Activated CD8-positive, alpha-beta T cell treated with anti-CD3 and anti-CD28 coated beads for 36 hours (primary cell): ENCODE measurements at regions of chr1 and their contacts with region 1.

Region 1: GRCh38 chr1:24970399-24970753 is 40.3 kb upstream of the RUNX3 start:
- DNase-seq: peak; percentile 48
- ATAC-seq: no peak
- H3K4me3 Mint-ChIP-seq: peak overlapping the region; percentile 77
- H3K27ac Mint-ChIP-seq: peak overlapping the region; percentile 89
- H3K4me1 Mint-ChIP-seq: peaks cover 85% of the 10 kb centered on the region
- H3K27me3 Mint-ChIP-seq: no peaks in the 10 kb centered on the region
- CTCF ChIP-seq: peak; percentile 26

Region 2: DNA sequence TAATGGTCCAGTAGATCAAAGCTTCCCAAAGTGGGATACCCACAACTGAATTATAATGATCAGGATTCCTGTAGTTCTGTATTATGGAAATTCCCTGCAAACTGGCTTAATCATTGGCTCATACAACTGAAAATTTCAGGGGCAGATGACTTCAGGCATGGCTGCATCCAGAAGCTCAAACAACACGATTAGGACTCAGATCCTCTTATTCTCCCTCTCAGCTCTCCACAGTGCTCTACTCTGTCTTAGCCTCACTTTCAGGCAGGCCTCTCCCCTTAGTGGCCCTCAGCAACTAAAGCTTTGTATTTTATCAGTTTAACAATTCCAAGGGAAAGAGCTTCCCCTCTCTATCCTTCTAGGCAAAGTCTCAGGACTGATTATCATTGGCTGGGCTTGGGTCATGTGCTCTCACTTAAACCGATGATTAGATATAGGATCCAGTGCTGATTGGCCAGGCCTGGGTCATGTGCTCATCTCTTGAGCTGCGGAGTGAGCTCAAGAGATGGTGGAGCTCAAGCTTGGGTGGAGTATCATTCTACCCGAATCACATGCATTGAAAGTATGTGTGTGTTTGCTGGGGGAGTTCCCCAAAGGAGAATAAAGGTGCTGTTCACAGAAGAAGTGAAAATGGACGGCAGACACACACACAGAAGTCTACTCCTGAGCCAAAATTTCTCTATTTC is 17.6 kb after region 1 on chr1:
- CTCF ChIA-PET with region 1: interaction called, 40 read pairs
- POLR2A ChIA-PET with region 1: interaction called, 157 read pairs
- intact Hi-C with region 1: no loop called
- DNase-seq: peak; percentile 83
- ATAC-seq: peak; percentile 76
- H3K4me3 Mint-ChIP-seq: no peak overlapping the region
- H3K27ac Mint-ChIP-seq: peak overlapping the region; percentile 82
- H3K4me1 Mint-ChIP-seq: peaks cover 95% of the 10 kb centered on the region
- H3K27me3 Mint-ChIP-seq: no peaks in the 10 kb centered on the region
- CTCF ChIP-seq: no peak

Region 3: GRCh38 chr1:24996983-24997893 is 26.9 kb after region 1 on chr1:
- CTCF ChIA-PET with region 1: interaction called, 5 read pairs
- POLR2A ChIA-PET with region 1: interaction called, 157 read pairs
- intact Hi-C with region 1: loop called (anchors 2 kb)
- DNase-seq: peak; percentile 99
- ATAC-seq: peak; percentile 74
- H3K4me3 Mint-ChIP-seq: peak overlapping the region; percentile 73
- H3K27ac Mint-ChIP-seq: peak overlapping the region; percentile 97
- H3K4me1 Mint-ChIP-seq: peaks cover 92% of the 10 kb centered on the region
- H3K27me3 Mint-ChIP-seq: no peaks in the 10 kb centered on the region
- CTCF ChIP-seq: no peak

Region 4: DNA sequence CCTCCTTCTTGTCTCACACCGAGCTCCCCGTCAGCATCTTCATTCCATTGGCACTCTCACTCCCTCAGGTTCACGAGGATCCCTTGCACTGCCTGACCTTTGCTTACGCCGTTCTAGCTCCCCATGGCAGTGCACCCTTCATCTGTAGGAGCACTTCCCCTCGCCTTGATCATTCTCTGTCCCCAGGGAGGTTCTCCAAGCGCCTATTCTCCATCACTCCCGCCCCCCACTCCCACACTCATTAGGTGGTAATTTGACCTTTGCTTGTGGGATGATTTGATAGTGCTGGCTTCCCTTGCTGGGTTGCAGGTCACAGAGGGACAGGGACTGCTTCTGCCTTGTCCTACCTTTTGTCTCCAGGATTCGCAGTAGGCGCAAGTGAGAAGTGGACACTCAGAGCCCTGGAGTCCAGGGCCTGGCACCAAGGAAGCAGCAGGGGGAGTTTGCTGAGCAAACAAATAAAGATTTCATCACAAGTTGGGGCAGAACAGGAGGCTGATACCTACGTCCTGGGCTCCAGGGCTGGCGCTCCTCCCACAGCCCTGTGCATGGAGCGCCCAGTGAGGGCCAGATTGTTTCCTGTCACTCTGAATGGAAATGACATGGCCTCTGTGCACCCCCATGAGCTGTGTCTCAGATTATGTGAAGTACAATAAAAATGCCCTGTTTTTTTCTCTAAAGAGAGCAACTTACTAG is 41.7 kb after region 1 on chr1:
- CTCF ChIA-PET with region 1: interaction called, 3 read pairs
- POLR2A ChIA-PET with region 1: interaction called, 14 read pairs
- intact Hi-C with region 1: no loop called
- DNase-seq: peak; percentile 74
- ATAC-seq: peak; percentile 79
- H3K4me3 Mint-ChIP-seq: no peak overlapping the region
- H3K27ac Mint-ChIP-seq: peak overlapping the region; percentile 86
- H3K4me1 Mint-ChIP-seq: peaks cover 68% of the 10 kb centered on the region
- H3K27me3 Mint-ChIP-seq: no peaks in the 10 kb centered on the region
- CTCF ChIP-seq: no peak

Region 5: GRCh38 chr1:25256578-25256965 is 286.2 kb after region 1 on chr1:
- CTCF ChIA-PET with region 1: no interaction called
- POLR2A ChIA-PET with region 1: no interaction called
- intact Hi-C with region 1: no loop called
- DNase-seq: no peak
- ATAC-seq: no peak
- H3K4me3 Mint-ChIP-seq: no peak overlapping the region
- H3K27ac Mint-ChIP-seq: no peak overlapping the region
- H3K4me1 Mint-ChIP-seq: peaks cover 5% of the 10 kb centered on the region
- H3K27me3 Mint-ChIP-seq: no peaks in the 10 kb centered on the region
- CTCF ChIP-seq: no peak